Activated CD8-positive, alpha-beta T cell treated with anti-CD3 and anti-CD28 coated beads for 36 hours (primary cell): ENCODE measurements at regions of chr4 and their contacts with region 1.

Region 1: DNA sequence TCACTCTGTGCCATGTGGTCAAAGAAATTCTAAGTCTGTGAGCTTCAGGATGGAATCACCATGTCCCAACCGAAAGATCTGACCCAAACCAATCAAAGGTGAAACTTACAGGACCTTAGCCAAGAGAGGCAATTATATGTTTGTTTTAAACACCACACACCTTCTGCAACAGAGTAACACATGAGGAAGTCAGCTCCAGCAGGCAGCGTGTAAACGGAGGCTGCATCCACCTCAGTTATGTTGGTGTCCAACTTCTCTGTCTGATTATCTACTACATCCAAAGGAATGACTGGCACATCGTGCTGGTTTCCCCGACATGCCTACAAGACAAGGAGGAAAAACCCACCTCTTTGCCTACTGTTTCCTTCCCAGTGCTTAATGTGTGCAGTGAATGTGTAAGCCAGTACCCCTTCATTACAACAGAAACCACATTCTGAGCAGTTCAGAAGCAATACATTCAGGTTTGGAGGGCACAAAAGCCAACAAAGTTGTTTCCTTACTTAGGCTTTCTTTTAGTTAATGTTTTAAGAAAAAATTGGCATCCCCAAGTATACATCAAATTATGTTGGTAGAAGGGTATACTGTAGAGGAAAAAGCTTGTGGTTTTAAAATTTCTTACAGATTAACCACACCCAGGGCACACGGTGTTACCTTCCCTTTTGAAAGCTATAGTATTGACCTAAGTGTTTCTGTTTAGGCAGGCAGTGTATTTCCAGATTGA is 12.4 kb downstream of the CASP6 start:
- DNase-seq: peak; percentile 23
- ATAC-seq: peak; percentile 82
- H3K4me3 Mint-ChIP-seq: no peak overlapping the region
- H3K27ac Mint-ChIP-seq: peak overlapping the region; percentile 78
- H3K4me1 Mint-ChIP-seq: peaks cover 28% of the 10 kb centered on the region
- H3K27me3 Mint-ChIP-seq: no peaks in the 10 kb centered on the region
- CTCF ChIP-seq: no peak

Region 2: DNA sequence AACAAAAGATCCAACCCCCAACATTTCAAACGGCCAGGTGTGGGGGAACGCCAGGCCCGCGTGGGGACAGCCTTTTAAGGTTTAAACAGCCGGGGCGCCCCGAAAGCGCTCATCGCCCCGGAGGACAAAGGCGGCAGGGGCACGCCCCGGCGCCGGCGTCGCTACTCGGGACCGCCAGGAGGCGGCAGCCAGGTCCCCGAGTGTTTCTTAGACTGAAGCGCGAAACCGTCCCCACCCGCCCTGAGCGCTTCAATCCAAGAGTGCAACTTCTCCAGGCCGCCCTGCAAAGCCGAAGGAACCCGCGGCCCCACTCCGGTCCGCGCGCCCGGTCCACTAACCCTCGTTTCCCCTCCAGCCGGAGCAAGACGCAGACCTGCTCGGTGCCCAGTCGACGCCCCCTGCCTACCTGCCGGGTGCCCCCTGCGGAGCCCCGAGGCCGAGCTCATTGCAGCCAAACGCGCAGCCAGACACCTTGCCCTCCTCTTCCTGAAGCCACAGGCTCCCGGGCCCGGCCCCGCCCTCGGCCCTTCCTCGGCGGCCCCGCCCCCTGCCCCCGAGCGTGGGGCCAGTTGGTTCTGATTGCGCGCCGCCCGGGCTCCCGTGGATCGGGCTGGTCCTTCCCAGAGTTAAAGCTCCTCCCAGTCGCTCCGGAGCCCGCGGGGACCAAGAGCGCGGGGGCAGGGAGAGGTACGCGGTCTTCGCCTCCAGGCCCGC is 12.3 kb after region 1 on chr4 and contains the start of gene CASP6:
- CTCF ChIA-PET with region 1: interaction called, 12 read pairs
- POLR2A ChIA-PET with region 1: interaction called, 7 read pairs
- intact Hi-C with region 1: no loop called
- DNase-seq: peak; percentile 82
- ATAC-seq: peak; percentile 85
- H3K4me3 Mint-ChIP-seq: peak within 1 kb of the TSS; percentile 91
- H3K27ac Mint-ChIP-seq: peak within 1 kb of the TSS; percentile 91
- H3K4me1 Mint-ChIP-seq: peaks cover 23% of the 10 kb centered on the region
- H3K27me3 Mint-ChIP-seq: no peaks in the 10 kb centered on the region
- CTCF ChIP-seq: peak; percentile 71
- total RNA-seq, gene CASP6: 19.1 to 28.3 TPM